PC-9 (cell line): ENCODE measurements at regions of chrX and their contacts with region 1.

Region 1: GRCh38 chrX:108527724-108528123 is 88.1 kb downstream of the COL4A5 start:
- DNase-seq: no peak
- H3K4me3 ChIP-seq: no peak overlapping the region
- H3K27ac ChIP-seq: no peak overlapping the region
- H3K4me1 ChIP-seq: no peaks in the 10 kb centered on the region
- H3K27me3 ChIP-seq: no peaks in the 10 kb centered on the region
- CTCF ChIP-seq: no peak

Region 2: GRCh38 chrX:108165383-108166111 is 362.2 kb before region 1 on chrX:
- CTCF ChIA-PET with region 1: no interaction called
- POLR2A ChIA-PET with region 1: no interaction called
- intact Hi-C with region 1: no loop called
- DNase-seq: peak in 1 of 2 experiments; percentile 26
- H3K4me3 ChIP-seq: no peak overlapping the region
- H3K27ac ChIP-seq: no peak overlapping the region
- H3K4me1 ChIP-seq: peaks cover 9% of the 10 kb centered on the region
- H3K27me3 ChIP-seq: no peaks in the 10 kb centered on the region
- CTCF ChIP-seq: peak; percentile 49; the same call in 1 of the 2 replicates

Region 3: GRCh38 chrX:108511721-108512120 is 16.0 kb before region 1 on chrX:
- CTCF ChIA-PET with region 1: interaction called, 13 read pairs
- POLR2A ChIA-PET with region 1: no interaction called
- intact Hi-C with region 1: no loop called
- DNase-seq: no peak
- H3K4me3 ChIP-seq: no peak overlapping the region
- H3K27ac ChIP-seq: no peak overlapping the region
- H3K4me1 ChIP-seq: no peaks in the 10 kb centered on the region
- H3K27me3 ChIP-seq: no peaks in the 10 kb centered on the region
- CTCF ChIP-seq: no peak

Region 4: GRCh38 chrX:108772549-108772948 is 244.8 kb after region 1 on chrX:
- CTCF ChIA-PET with region 1: no interaction called
- POLR2A ChIA-PET with region 1: no interaction called
- intact Hi-C with region 1: no loop called
- DNase-seq: no peak
- H3K4me3 ChIP-seq: no peak overlapping the region
- H3K27ac ChIP-seq: no peak overlapping the region
- H3K4me1 ChIP-seq: no peaks in the 10 kb centered on the region
- H3K27me3 ChIP-seq: no peaks in the 10 kb centered on the region
- CTCF ChIP-seq: no peak

Region 5: GRCh38 chrX:109440475-109440874 is 912.8 kb after region 1 on chrX:
- CTCF ChIA-PET with region 1: no interaction called
- POLR2A ChIA-PET with region 1: no interaction called
- intact Hi-C with region 1: no loop called
- DNase-seq: no peak
- H3K4me3 ChIP-seq: no peak overlapping the region
- H3K27ac ChIP-seq: no peak overlapping the region
- H3K4me1 ChIP-seq: no peaks in the 10 kb centered on the region
- H3K27me3 ChIP-seq: peaks cover 6% of the 10 kb centered on the region; the same call in 1 of the 2 replicates
- CTCF ChIP-seq: no peak